GM13977 (cell line): ENCODE measurements at regions of chr9 and their contacts with region 1.

Region 1: DNA sequence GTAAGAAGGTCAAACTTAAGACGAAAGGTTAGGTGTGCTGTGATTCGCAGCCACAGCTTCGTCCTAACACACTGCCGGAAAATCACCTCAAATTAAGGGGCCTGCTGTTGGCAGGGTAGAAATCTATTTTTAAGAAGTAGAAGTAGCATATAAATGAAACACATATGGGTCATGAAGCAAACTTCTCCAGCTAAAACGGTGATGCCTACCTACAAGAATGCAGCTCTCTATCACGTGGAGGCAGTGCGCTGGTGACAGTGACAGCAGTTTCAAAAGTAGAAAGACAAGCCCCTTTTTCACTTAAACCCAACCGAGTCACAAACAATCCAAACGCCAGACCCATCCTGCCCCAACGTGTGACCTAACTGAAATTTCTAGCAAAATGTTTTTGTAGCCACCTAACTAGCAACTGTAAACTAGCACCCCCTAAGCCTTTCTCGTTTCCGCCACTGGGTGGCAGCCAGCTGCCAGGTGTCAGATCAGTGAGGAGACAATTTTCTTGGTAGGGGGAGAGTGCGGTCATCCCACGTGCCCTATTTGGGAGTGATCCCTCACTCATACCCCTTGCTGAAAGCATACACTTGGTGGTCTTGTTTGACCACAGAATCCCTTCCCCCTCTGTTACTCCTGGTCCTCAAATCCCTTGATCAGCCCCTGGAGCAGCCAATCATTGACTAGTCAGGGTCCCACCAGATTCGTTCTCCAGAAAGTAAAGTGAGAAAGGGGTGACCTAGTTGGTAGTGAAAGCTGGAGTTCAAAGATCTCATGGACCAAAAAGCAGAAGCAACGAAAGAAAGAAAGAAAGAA is 71.8 kb upstream of the MAMDC2 start:
- DNase-seq: peak; percentile 53
- CTCF ChIP-seq: peak; percentile 86

Region 2: DNA sequence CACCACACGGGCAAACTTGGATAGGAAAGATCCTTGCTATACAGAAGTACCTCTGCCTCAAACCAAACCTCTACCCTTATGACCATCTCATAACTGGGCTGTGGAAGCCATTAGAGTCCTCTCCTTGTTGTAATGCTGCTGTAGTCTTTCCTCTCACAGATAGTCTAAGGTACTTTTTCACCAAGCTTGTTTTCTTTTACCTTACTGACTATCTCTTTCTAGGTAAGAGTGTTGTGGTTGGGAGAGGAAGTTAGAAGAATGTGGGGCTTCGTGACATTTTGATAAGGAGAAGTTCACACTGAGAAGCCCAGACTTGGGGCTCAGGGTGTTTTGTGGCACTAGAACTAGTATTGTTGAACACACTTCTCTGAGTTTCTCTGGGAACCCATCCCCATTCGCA is 142.4 kb before region 1 on chr9:
- in situ Hi-C with region 1: no loop called
- DNase-seq: no peak
- CTCF ChIP-seq: no peak

Region 3: GRCh38 chr9:70111042-70111602 is 139.3 kb after region 1 on chr9:
- in situ Hi-C with region 1: loop called (anchors 10 kb)
- DNase-seq: peak; percentile 41
- CTCF ChIP-seq: peak; percentile 95

Region 4: GRCh38 chr9:70165006-70165602 is 193.3 kb after region 1 on chr9:
- in situ Hi-C with region 1: no loop called
- DNase-seq: no peak
- CTCF ChIP-seq: no peak